ENCODE measurements at regions of chr12 and their contacts with region 1.

Region 1: DNA sequence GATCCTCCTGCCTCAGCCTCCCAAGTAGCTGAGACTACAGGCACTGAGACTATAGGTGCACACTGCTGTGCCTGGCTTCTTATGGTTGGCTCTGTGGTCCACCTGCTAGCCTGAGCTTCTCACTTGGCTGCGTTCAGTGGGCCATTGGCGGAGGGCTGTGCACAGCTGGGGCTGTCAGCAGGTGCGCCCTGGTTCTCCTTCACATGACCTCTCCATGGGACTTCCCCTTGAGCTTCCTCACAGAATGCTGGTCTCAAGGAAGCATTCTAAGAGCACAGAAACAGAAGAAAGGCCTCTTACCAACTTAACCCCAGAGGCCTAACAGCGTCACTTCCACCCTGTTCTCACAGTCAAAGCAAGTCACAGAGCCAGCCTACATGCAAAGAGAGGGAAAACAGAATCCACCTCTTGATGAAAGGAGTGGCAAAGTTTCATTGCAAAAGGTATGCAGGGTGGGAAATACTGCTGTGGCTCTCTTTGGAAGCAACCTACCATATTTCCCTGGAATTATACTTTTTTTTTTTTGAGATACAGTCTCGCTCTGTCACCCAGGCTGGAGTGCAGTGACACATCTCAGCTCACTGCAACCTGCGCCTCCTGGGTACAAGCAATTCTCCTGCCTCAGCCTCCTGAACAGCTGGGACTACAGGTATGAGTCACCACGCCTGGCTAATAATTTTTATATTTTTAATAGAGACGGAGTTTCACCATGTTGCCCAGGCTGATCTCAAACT is 9.3 kb downstream of the RILPL2 start:
- DNase-seq: peak; percentile 67
- ATAC-seq: peak; percentile 88
- H3K4me3 Mint-ChIP-seq: peak overlapping the region; percentile 75
- H3K27ac Mint-ChIP-seq: peak overlapping the region; percentile 93
- H3K4me1 Mint-ChIP-seq: peaks cover 39% of the 10 kb centered on the region
- H3K27me3 Mint-ChIP-seq: no peaks in the 10 kb centered on the region
- CTCF ChIP-seq: no peak

Region 2: GRCh38 chr12:123388177-123388947 is 38.8 kb before region 1 on chr12:
- CTCF ChIA-PET with region 1: no interaction called
- POLR2A ChIA-PET with region 1: interaction called, 12 read pairs
- intact Hi-C with region 1: loop called (anchors 1 kb)
- DNase-seq: peak; percentile 79
- ATAC-seq: peak; percentile 59
- H3K4me3 Mint-ChIP-seq: peak overlapping the region; percentile 88
- H3K27ac Mint-ChIP-seq: peak overlapping the region; percentile 87
- H3K4me1 Mint-ChIP-seq: peaks cover 36% of the 10 kb centered on the region
- H3K27me3 Mint-ChIP-seq: no peaks in the 10 kb centered on the region
- CTCF ChIP-seq: no peak

Region 3: GRCh38 chr12:123410041-123410412 is 17.2 kb before region 1 on chr12:
- CTCF ChIA-PET with region 1: no interaction called
- POLR2A ChIA-PET with region 1: interaction called, 20 read pairs
- intact Hi-C with region 1: no loop called
- DNase-seq: no peak
- ATAC-seq: no peak
- H3K4me3 Mint-ChIP-seq: no peak overlapping the region
- H3K27ac Mint-ChIP-seq: no peak overlapping the region
- H3K4me1 Mint-ChIP-seq: peaks cover 13% of the 10 kb centered on the region
- H3K27me3 Mint-ChIP-seq: no peaks in the 10 kb centered on the region
- CTCF ChIP-seq: no peak

Region 4: GRCh38 chr12:123457980-123458783 is 31.0 kb after region 1 on chr12 and contains the start of gene SNRNP35:
- CTCF ChIA-PET with region 1: interaction called, 3 read pairs
- POLR2A ChIA-PET with region 1: interaction called, 70 read pairs
- intact Hi-C with region 1: loop called (anchors 1 kb)
- DNase-seq: peak; percentile 84
- ATAC-seq: peak; percentile 79
- H3K4me3 Mint-ChIP-seq: peak within 1 kb of the TSS; percentile 100
- H3K27ac Mint-ChIP-seq: peak within 1 kb of the TSS; percentile 100
- H3K4me1 Mint-ChIP-seq: peaks cover 33% of the 10 kb centered on the region
- H3K27me3 Mint-ChIP-seq: no peaks in the 10 kb centered on the region
- CTCF ChIP-seq: no peak
- total RNA-seq, gene SNRNP35: 39.5 and 51.5 TPM in 2 replicates